ENCODE measurements at regions of chr10 and their contacts with region 1.

Region 1: GRCh38 chr10:58952747-58953466 is 223.5 kb upstream of the PHYHIPL start:
- DNase-seq: peak; percentile 16
- CTCF ChIP-seq: peak; percentile 78

Region 2: DNA sequence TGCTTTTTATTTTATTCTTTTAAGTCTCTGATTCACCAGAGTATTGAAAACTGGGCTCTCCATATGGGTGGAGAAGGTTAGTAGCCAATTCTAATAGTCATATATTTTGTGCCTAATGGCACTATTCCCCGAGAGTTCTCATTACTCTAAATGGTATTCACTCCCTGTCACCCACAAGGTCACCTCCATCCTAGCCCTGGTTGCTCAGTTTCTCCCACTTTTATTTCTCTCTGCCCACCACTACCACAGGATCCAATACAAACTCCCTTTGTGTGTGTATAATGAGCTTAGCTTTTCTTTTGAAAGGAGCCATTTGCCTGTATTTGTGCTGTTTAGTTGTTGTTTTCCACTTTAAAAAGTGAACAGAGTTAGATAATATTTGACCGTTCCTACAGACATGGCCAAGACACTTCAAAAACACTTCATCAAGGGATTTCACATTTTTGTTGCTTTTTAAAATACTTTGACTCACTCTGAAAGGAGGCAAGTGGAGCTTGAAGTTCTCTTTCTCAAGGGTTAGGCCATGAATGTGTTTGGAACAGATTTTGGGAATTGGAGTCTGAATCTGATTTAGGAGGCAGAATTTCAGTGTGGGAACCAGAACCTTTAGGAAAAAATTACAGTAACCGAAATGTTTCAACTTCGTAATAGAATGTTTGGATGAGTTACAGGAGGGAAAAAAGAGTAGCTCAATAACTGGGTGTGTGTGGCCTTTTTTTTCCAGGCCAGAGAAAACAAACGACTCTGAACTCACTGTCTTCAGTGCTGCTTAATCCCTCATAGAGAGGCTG is 118.9 kb before region 1 on chr10:
- CTCF ChIA-PET with region 1: no interaction called
- POLR2A ChIA-PET with region 1: no interaction called
- DNase-seq: no peak
- CTCF ChIP-seq: no peak

Region 3: DNA sequence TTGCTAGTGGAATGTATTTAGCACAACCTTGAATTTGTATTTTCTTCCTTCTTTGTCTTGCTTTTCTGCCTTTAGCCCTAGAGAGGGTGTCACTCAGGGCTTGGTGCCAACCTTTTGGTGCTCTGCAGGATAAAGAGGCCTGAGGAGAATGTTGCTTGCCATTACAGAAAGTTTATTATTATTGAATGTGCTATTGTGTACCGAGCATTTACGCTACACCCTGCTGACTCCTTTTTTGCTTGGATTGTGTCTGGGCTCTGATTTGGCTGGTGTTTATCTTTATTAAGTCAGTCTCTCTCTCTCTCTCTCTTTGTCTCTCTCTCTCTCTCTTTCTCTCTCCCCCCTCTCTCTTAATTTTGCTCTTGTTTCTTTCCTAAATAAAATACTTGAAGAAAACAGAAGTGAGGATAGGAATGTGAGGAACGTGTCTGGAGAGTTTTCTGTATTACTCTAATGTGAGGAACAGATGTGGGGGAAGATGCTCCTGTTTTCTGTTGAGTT is 60.8 kb before region 1 on chr10:
- CTCF ChIA-PET with region 1: no interaction called
- POLR2A ChIA-PET with region 1: no interaction called
- DNase-seq: no peak
- CTCF ChIP-seq: no peak

Region 4: GRCh38 chr10:58937423-58937822 is 15.5 kb before region 1 on chr10:
- CTCF ChIA-PET with region 1: interaction called, 10 read pairs
- POLR2A ChIA-PET with region 1: no interaction called
- DNase-seq: no peak
- CTCF ChIP-seq: no peak

Region 5: GRCh38 chr10:58967551-58968388 is 14.9 kb after region 1 on chr10:
- CTCF ChIA-PET with region 1: interaction called, 14 read pairs
- POLR2A ChIA-PET with region 1: no interaction called
- DNase-seq: peak; percentile 18
- CTCF ChIP-seq: no peak

Region 6: DNA sequence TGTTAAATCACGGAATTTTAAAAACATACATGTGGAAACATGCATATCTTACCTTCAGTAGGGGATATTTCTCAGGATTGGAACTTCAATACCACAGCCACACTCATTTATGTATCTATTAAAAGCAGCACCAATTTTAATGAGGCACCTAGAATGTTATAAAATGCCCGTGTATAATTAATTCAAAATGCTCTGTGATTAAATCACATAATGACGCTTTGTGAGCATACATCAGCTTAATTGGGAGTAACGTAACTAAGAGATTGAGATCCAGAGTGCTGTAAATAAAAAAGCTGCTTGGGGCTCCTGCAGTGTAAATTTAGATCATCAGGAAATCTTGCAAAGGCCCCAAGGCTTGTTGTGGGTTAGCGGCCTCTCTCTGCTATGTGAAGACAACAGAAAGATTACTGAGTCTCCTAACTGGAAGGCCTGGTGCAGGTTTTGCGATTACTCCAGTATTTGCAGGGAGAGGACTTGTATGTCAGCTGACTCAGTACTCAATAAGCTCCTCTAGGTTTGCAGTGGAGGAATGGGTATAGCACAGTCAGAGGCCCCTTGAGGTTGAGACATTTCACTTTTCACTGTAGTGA is 28.0 kb after region 1 on chr10:
- CTCF ChIA-PET with region 1: interaction called, 14 read pairs
- POLR2A ChIA-PET with region 1: no interaction called
- DNase-seq: no peak
- CTCF ChIP-seq: no peak

Region 7: GRCh38 chr10:59181668-59182067 is 228.8 kb after region 1 on chr10:
- CTCF ChIA-PET with region 1: interaction called, 33 read pairs
- POLR2A ChIA-PET with region 1: no interaction called
- DNase-seq: peak; percentile 34
- CTCF ChIP-seq: peak; percentile 53